ENCODE measurements at regions of chr12 and their contacts with region 1.

Region 1: GRCh38 chr12:52327052-52327829 is 6.0 kb upstream of the KRT83 start:
- DNase-seq: peak; percentile 63
- H3K4me3 Mint-ChIP-seq: no peak overlapping the region
- H3K27ac Mint-ChIP-seq: no peak overlapping the region
- H3K4me1 Mint-ChIP-seq: peaks cover 14% of the 10 kb centered on the region
- H3K27me3 Mint-ChIP-seq: peaks cover 29% of the 10 kb centered on the region

Region 2: DNA sequence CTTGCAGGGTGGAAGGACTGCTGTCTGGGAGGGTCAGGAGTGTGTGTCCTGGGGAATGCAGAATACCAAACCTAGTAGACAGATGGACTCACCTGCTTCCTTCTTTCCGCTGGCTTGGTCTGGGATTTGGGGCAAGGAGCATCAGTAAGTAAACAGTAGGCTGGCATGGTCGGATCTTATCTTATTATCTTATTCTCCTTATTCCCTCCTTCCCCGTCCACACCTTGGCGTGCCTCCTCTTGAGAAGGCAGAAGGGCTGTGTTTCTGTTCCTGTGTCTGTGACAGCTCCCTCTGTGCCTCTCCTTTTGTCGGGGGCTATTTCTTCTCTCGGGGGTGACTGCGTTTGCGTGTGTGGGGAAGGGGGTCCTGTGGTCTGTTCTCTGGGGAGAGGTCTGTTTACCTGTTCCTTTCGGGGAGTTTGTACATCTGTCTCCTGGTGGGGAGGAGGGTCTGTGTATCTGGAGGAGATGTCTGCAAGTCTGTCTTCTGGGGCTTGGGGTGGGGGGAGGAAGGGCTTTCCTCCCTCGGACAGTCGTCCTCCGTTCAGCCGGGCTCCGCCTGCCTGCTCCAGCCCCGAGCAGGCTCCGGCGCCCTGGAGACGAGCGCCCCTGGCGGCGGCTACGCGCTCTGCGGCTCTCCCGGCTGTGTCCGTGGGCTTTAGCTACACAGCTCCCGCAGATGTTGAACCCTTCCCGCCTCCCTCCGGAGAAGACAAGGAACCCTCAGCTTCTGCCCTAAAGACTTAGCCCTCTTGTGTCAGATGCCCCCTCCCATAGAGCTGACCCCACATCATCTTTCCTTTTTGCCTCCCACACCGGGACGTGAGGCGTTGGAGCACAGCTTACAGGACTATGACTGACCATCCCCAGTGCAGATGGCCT is 48.5 kb before region 1 on chr12:
- intact Hi-C with region 1: loop called (anchors 5 kb)
- DNase-seq: peak; percentile 68
- H3K4me3 Mint-ChIP-seq: peak overlapping the region; percentile 49
- H3K27ac Mint-ChIP-seq: no peak overlapping the region
- H3K4me1 Mint-ChIP-seq: peaks cover 23% of the 10 kb centered on the region
- H3K27me3 Mint-ChIP-seq: peaks cover 25% of the 10 kb centered on the region